K562 (cell line): ENCODE measurements at regions of chr11 and their contacts with region 1.

Region 1: GRCh38 chr11:66282468-66283386 is 4.8 kb downstream of the CNIH2 start:
- DNase-seq: peak; percentile 96 to 98 (median 96)
- ATAC-seq: peak; percentile 96
- H3K4me3 ChIP-seq: no peak overlapping the region
- H3K27ac ChIP-seq: no peak overlapping the region
- H3K4me1 ChIP-seq: peaks cover 8 to 52% of the 10 kb centered on the region in 2 experiments; a peak in 3 of 5 replicates
- H3K27me3 ChIP-seq: no peaks in the 10 kb centered on the region
- CTCF ChIP-seq: peak; percentile 91 to 97 (median 97)
- EP300 ChIP-seq: 0 out of 2 replicates have a peak, but pooled peaks have one; percentile 19
- POLR2A ChIP-seq: peak; percentile 31; the same call in 1 of the 2 replicates
- RAD21 ChIP-seq: peak; percentile 62 to 68

Region 2: GRCh38 chr11:66045177-66045639 is 237.5 kb before region 1 on chr11:
- CTCF ChIA-PET with region 1: no interaction called
- POLR2A ChIA-PET with region 1: no interaction called
- in situ Hi-C with region 1: no loop called
- intact Hi-C with region 1: no loop called
- DNase-seq: peak; percentile 87 to 97 (median 95)
- ATAC-seq: peak; percentile 98
- H3K4me3 ChIP-seq: no peak overlapping the region
- H3K27ac ChIP-seq: no peak overlapping the region
- H3K4me1 ChIP-seq: peaks cover 0 to 8% of the 10 kb centered on the region in 2 experiments; a peak in 3 of 5 replicates
- H3K27me3 ChIP-seq: no peaks in the 10 kb centered on the region; a peak in 1 of 5 replicates
- CTCF ChIP-seq: peak; percentile 91 to 94 (median 93)
- EP300 ChIP-seq: no peak
- POLR2A ChIP-seq: no peak
- RAD21 ChIP-seq: peak; percentile 46 to 62

Region 3: DNA sequence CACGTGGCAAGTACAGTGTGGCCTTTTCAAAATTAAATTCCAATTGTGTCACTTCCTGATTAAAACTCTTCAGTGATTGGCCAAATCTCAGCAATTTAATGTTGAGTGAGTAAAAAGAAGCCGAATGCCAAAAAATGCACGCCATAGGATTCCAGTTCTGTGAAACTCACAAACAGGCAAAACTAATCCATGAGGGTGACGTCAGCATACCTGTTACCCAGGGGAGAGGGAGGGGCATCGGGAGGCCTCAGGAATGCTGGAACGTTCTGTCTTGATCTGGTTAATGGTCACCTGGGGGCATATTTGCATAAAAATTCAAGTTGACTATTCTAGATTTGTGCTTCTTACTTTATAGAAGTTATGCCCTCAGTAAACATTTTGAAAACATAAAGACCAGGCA is 54.2 kb before region 1 on chr11:
- CTCF ChIA-PET with region 1: no interaction called
- POLR2A ChIA-PET with region 1: no interaction called
- in situ Hi-C with region 1: no loop called
- intact Hi-C with region 1: no loop called
- DNase-seq: no peak
- ATAC-seq: no peak
- H3K4me3 ChIP-seq: no peak overlapping the region
- H3K27ac ChIP-seq: no peak overlapping the region
- H3K4me1 ChIP-seq: no peaks in the 10 kb centered on the region
- H3K27me3 ChIP-seq: no peaks in the 10 kb centered on the region
- CTCF ChIP-seq: no peak
- EP300 ChIP-seq: no peak
- POLR2A ChIP-seq: no peak
- RAD21 ChIP-seq: no peak

Region 4: GRCh38 chr11:66268283-66268951 is 14.3 kb before region 1 on chr11 and contains the start of gene RAB1B:
- CTCF ChIA-PET with region 1: no interaction called
- POLR2A ChIA-PET with region 1: interaction called, 21 read pairs
- in situ Hi-C with region 1: no loop called
- intact Hi-C with region 1: no loop called
- DNase-seq: peak; percentile 91 to 100 (median 96)
- ATAC-seq: peak; percentile 92
- H3K4me3 ChIP-seq: peak within 1 kb of the TSS; percentile 100
- H3K27ac ChIP-seq: peak within 1 kb of the TSS; percentile 95
- H3K4me1 ChIP-seq: peaks cover 5 to 47% of the 10 kb centered on the region in 2 experiments; a peak in 4 of 5 replicates
- H3K27me3 ChIP-seq: no peaks in the 10 kb centered on the region
- CTCF ChIP-seq: no peak
- EP300 ChIP-seq: no peak
- POLR2A ChIP-seq: peak; percentile 82; the same call in 1 of the 2 replicates
- RAD21 ChIP-seq: no peak
- polyA plus RNA-seq, gene RAB1B: 5.6 to 16.0 TPM

Region 5: GRCh38 chr11:66592457-66593302 is 310.0 kb after region 1 on chr11 and contains the starts of genes CCDC87 and CCS:
- CTCF ChIA-PET with region 1: no interaction called
- POLR2A ChIA-PET with region 1: no interaction called
- in situ Hi-C with region 1: no loop called
- intact Hi-C with region 1: no loop called
- DNase-seq: peak; percentile 97 to 100 (median 100)
- ATAC-seq: peak; percentile 96
- H3K4me3 ChIP-seq: peak within 1 kb of the TSS; percentile 75
- H3K27ac ChIP-seq: peak within 1 kb of the TSS; percentile 75
- H3K4me1 ChIP-seq: peaks cover 32 to 51% of the 10 kb centered on the region in 2 experiments
- H3K27me3 ChIP-seq: no peaks in the 10 kb centered on the region
- CTCF ChIP-seq: peak; percentile 96 to 99 (median 99)
- EP300 ChIP-seq: no peak
- POLR2A ChIP-seq: peak; percentile 94
- RAD21 ChIP-seq: peak; percentile 51 to 56; a peak in 3 of 4 replicates
- polyA plus RNA-seq, gene CCDC87: 0.03 TPM in 1 of 2 experiments, not detected in the other
- polyA plus RNA-seq, gene CCS: 1.1 to 3.0 TPM